Activated CD4-positive, alpha-beta memory T cell treated with anti-CD3 and anti-CD28 coated beads for 36 hours (primary cell): ENCODE measurements at regions of chr17 and their contacts with region 1.

Region 1: DNA sequence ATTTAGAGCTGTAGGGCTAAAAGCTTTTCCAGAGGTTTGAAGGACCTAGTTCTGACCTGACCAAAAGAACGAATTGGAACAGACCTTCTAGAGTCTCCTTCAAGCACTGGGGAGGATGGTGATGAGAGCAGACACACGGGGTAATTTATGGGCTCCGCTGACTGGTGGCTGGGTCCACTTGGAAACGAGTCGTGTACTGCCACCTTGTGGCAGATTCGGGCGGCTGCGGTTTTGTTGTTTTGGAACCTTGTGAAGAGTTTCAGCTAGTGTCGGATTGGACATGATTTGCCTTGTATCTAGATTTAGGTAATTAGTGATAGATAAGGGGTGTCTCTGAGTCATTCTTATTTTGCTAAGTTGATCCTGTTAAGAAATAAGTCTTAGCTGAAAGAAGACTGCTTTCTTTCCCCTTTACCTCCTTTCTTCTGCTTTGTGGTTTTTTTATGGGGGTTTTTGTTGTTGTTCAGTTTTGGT is 98.9 kb downstream of the AATF start:
- DNase-seq: peak; percentile 89
- H3K4me3 Mint-ChIP-seq: no peak overlapping the region
- H3K27ac Mint-ChIP-seq: peak overlapping the region; percentile 54
- H3K4me1 Mint-ChIP-seq: peaks cover 10% of the 10 kb centered on the region
- H3K27me3 Mint-ChIP-seq: no peaks in the 10 kb centered on the region

Region 2: GRCh38 chr17:36705874-36706731 is 341.6 kb before region 1 on chr17:
- CTCF ChIA-PET with region 1: interaction called, 3 read pairs
- POLR2A ChIA-PET with region 1: no interaction called
- intact Hi-C with region 1: loop called (anchors 10 kb)
- DNase-seq: peak; percentile 67
- H3K4me3 Mint-ChIP-seq: no peak overlapping the region
- H3K27ac Mint-ChIP-seq: no peak overlapping the region
- H3K4me1 Mint-ChIP-seq: no peaks in the 10 kb centered on the region
- H3K27me3 Mint-ChIP-seq: peaks cover 28% of the 10 kb centered on the region

Region 3: GRCh38 chr17:37067555-37068111 is 20.0 kb after region 1 on chr17:
- CTCF ChIA-PET with region 1: interaction called, 11 read pairs
- POLR2A ChIA-PET with region 1: no interaction called
- intact Hi-C with region 1: no loop called
- DNase-seq: no peak
- H3K4me3 Mint-ChIP-seq: no peak overlapping the region
- H3K27ac Mint-ChIP-seq: no peak overlapping the region
- H3K4me1 Mint-ChIP-seq: no peaks in the 10 kb centered on the region
- H3K27me3 Mint-ChIP-seq: no peaks in the 10 kb centered on the region

Region 4: DNA sequence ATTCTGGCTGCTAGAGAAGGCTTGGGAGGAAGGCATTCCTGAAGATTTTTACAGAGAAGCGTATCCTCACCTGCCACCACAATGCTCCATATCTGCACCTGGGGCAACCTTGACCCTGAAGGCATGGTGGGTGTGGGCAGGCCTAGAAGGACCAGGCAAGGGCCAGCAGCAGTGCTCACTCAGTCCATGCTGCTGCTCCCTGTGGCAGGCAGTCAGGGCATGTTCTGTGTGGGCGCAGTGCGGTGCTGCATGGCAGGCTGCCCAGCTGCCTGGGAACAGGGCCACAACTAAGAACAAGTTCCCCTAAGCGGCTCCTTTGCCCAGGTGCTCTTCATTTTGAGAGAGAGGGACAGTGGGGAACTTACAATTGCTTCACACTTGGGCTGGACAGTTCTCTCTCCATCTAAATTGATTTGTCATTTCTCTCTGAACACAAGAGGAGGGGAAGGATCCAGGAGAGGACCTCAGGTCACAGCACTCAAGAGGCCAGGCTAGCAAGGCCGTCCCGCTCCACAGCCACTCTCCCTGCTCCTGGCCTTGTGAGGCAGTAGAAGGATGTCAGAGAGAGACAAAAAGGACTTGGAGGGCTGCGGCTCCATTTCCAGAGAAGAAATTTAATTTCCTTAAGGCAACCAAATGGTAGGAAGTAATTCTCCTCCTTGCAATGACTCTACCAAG is 59.9 kb after region 1 on chr17:
- CTCF ChIA-PET with region 1: no interaction called
- POLR2A ChIA-PET with region 1: no interaction called
- intact Hi-C with region 1: no loop called
- DNase-seq: no peak
- H3K4me3 Mint-ChIP-seq: no peak overlapping the region
- H3K27ac Mint-ChIP-seq: no peak overlapping the region
- H3K4me1 Mint-ChIP-seq: no peaks in the 10 kb centered on the region
- H3K27me3 Mint-ChIP-seq: no peaks in the 10 kb centered on the region

Region 5: DNA sequence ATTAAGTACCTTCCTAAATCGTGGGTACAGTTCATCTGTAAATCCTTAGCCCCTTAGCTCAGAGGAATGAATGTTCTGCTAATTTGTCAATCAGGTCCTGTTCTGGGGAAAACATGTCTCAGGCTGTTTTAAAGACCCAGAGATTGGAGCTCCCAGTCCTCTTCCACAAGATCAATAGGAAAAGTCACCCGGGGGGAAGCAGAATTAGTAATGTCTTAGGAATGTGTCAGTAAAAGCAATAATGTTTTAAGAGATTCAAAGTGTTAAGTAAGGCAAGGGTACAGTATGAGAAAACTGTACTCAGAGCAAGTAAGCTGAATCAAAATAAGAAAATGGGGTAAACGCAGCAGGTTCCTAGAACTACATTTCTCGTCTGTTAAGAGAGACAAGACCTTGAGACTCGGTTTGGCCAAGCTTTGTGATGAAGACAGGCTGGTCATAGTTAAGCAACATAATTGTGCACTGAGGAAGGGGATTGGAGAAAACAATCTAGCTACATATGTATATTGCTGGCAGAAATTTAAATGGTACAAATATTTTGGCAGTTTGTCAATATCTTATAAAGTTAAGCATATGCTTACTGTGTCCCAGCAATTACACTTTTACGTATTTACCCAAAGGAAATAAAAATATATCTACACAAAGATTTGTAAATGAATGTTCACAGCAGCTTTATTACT is 135.3 kb after region 1 on chr17:
- CTCF ChIA-PET with region 1: no interaction called
- POLR2A ChIA-PET with region 1: no interaction called
- intact Hi-C with region 1: no loop called
- DNase-seq: no peak
- H3K4me3 Mint-ChIP-seq: no peak overlapping the region
- H3K27ac Mint-ChIP-seq: no peak overlapping the region
- H3K4me1 Mint-ChIP-seq: no peaks in the 10 kb centered on the region
- H3K27me3 Mint-ChIP-seq: no peaks in the 10 kb centered on the region